ENCODE measurements at regions of chr20 and their contacts with region 1.

Region 1: DNA sequence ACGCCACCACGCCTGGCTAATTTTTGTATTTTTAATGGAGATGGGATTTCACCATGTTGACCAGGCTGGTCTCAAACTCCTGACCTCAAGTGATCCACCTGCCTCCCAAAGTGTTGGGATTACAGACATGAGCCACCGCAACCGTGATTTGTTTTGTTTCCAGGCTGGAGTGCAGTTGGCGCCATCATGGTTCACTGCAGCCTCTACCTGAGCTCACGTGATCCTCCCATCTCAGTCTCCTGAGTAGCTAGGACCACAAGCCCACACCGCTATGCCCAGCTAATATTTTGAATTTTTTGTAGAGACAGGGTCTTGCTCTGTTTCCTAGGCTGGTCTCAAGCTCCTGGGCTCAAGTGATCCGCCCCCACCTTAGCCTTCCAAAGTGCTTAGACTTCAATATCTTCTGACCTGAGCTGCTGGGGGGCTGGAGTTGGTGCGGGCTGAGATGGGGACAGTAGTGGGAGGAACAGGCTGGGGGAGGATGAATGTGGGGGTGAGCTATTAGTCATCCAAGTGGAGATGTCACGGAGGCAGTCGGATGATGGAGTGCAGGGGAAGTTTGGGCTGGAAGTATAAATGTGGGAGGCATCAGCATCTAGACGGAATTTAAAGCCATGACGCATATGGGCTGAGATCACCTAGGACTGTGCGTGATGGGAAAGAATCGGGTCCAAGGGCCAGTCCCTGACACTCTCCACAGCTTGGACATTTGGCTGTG is 23.1 kb upstream of the ZMYND8 start:
- DNase-seq: no peak
- H3K4me3 Mint-ChIP-seq: no peak overlapping the region
- H3K27ac Mint-ChIP-seq: no peak overlapping the region
- H3K4me1 Mint-ChIP-seq: peaks cover 28% of the 10 kb centered on the region
- H3K27me3 Mint-ChIP-seq: peaks cover 26% of the 10 kb centered on the region

Region 2: DNA sequence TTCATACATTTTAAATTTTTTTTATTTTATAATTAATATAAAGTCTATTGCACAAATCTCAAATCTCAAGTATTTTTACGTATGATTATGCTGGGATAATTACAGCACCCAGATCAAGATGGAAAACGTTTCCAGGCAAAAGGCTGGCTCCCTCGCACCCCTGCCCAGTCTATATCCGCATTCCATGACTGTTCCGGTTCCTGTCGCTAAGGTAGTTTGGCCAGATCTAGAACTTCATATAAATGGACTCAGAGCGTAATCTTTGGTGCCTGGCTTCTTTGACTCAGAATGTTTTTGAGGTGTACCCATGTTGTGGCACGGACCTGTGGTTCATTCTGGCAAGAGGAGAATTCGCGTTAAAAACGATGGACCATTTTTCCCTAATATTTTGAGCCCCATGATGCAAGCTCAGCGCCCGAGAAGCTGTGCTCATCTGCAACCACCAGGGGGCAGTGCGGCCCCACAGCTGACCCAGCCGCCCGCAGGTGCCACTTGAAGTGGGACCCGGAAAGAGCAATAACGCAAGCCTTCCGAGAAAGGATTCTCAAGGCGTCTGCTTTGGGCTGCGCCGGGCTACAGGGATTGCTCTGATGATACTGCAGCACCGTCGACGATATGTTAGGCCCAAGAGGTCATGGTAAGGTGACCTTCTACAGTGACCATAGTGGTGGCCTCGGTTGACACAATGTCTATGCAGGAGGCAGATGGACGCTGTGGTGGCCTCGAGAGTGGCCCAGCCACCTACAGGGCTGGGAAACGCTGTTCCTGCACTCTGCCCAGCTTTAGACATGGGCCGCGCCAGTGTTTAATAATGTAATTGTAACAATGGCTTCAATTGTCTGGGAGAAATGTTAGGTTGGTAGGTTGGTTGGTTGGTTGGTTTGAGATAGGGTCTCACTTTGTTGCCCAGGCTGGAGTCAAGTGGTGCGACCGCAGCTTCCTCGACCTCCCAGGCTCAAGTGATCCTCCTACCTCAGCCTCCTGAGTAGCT is 183.2 kb before region 1 on chr20:
- CTCF ChIA-PET with region 1: interaction called, 58 read pairs
- DNase-seq: peak; percentile 85
- H3K4me3 Mint-ChIP-seq: no peak overlapping the region
- H3K27ac Mint-ChIP-seq: no peak overlapping the region
- H3K4me1 Mint-ChIP-seq: peaks cover 12% of the 10 kb centered on the region
- H3K27me3 Mint-ChIP-seq: peaks cover 27% of the 10 kb centered on the region

Region 3: DNA sequence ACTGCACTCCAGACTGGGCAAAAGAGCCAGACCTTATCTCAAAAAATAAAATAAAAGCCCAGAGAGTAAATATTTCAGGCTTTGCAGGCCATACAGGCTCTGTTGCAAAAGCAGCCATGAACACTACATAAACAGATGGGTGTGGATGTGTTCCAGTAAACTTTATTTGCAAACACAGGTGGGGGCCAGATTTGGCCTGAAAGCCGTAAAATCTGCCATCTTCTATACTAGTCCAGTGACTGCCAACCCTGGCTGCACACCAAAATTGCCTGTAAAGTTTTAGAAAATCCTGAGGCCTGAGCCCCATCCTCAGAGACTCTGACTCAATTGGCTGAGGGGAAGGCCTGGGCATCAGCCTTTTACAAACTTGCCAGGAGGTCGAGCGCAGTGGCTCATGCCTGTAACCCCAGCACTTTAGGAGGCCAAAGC is 126.7 kb before region 1 on chr20:
- CTCF ChIA-PET with region 1: interaction called, 10 read pairs
- DNase-seq: no peak
- H3K4me3 Mint-ChIP-seq: no peak overlapping the region
- H3K27ac Mint-ChIP-seq: no peak overlapping the region
- H3K4me1 Mint-ChIP-seq: no peaks in the 10 kb centered on the region
- H3K27me3 Mint-ChIP-seq: no peaks in the 10 kb centered on the region

Region 4: GRCh38 chr20:47278563-47279348 is 100.8 kb before region 1 on chr20:
- CTCF ChIA-PET with region 1: interaction called, 403 read pairs
- DNase-seq: no peak
- H3K4me3 Mint-ChIP-seq: no peak overlapping the region
- H3K27ac Mint-ChIP-seq: no peak overlapping the region
- H3K4me1 Mint-ChIP-seq: peaks cover 16% of the 10 kb centered on the region
- H3K27me3 Mint-ChIP-seq: no peaks in the 10 kb centered on the region

Region 5: GRCh38 chr20:47356526-47357295 is 22.9 kb before region 1 on chr20 and contains the start of gene ZMYND8:
- CTCF ChIA-PET with region 1: interaction called, 33 read pairs
- DNase-seq: peak; percentile 94
- H3K4me3 Mint-ChIP-seq: peak within 1 kb of the TSS; percentile 88
- H3K27ac Mint-ChIP-seq: peak within 1 kb of the TSS; percentile 98
- H3K4me1 Mint-ChIP-seq: peaks cover 45% of the 10 kb centered on the region
- H3K27me3 Mint-ChIP-seq: no peaks in the 10 kb centered on the region

Region 6: GRCh38 chr20:47461120-47461685 is 81.6 kb after region 1 on chr20:
- CTCF ChIA-PET with region 1: no interaction called
- DNase-seq: no peak
- H3K4me3 Mint-ChIP-seq: no peak overlapping the region
- H3K27ac Mint-ChIP-seq: no peak overlapping the region
- H3K4me1 Mint-ChIP-seq: peaks cover 16% of the 10 kb centered on the region
- H3K27me3 Mint-ChIP-seq: peaks cover 7% of the 10 kb centered on the region

Region 7: GRCh38 chr20:47501483-47502270 is 122.1 kb after region 1 on chr20 and contains the start of gene NCOA3:
- CTCF ChIA-PET with region 1: interaction called, 13 read pairs
- DNase-seq: peak; percentile 93
- H3K4me3 Mint-ChIP-seq: peak within 1 kb of the TSS; percentile 99
- H3K27ac Mint-ChIP-seq: peak within 1 kb of the TSS; percentile 99
- H3K4me1 Mint-ChIP-seq: peaks cover 55% of the 10 kb centered on the region
- H3K27me3 Mint-ChIP-seq: peaks cover 4% of the 10 kb centered on the region

Measured in activated naive CD4-positive, alpha-beta T cell treated with anti-CD3 and anti-CD28 coated beads, Interleukin-2, amount 10 ng/mL, durations not matched to agents 7 days and 5 days (primary cell).